Activated CD4-positive, alpha-beta T cell treated with anti-CD3 and anti-CD28 coated beads for 36 hours (primary cell): ENCODE measurements at regions of chr2 and their contacts with region 1.

Region 1: DNA sequence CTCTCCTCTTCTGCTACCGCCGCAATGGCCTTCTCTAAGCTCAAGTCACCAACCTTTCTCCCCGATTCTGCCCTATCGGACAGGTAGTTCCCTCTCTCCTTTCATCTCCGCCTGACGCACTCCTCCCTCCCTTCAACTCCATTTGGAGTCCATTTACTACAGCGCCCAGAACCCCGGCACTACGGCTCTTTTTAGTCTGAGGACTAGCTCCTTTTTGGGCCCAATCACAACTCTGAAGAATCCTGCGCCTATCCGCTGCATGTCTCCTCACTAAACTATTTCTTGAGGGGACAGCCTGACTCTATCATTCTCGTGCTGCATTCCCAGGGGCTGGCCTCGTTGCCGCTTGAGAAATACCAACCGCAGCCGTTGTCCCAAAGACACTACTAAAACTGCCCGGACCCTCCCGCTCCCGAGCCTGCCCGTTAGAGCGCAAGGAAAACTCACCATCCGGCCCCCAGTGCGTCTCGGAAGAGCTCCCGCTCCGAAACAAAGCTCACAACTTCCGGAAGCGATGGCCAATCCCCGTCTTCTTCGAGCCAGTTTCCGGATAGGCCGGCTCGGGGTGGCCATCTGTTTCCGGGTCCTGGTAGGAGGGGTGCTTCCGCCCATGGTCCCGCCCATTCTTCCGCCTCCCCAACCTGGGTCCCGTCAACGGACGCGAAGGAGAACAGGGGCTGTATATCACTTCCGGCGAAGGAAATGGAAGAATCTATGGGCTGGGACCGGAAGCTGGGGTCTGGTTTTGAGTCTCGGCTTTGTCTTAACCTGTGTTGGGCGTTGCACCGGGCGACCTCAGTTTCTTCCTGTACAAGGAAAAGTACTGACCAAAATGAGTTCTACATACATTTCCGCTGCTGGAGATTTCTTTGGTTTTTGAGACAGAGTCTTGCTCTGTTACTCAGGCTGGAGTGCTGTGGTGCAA is at the start of gene TPRKB:
- DNase-seq: peak; percentile 98
- ATAC-seq: peak; percentile 99
- H3K4me3 Mint-ChIP-seq: peak within 1 kb of the TSS; percentile 92
- H3K27ac Mint-ChIP-seq: peak within 1 kb of the TSS; percentile 94
- H3K4me1 Mint-ChIP-seq: peaks cover 14% of the 10 kb centered on the region
- H3K27me3 Mint-ChIP-seq: no peaks in the 10 kb centered on the region
- total RNA-seq, gene TPRKB: 23.3 to 35.3 TPM

Region 2: DNA sequence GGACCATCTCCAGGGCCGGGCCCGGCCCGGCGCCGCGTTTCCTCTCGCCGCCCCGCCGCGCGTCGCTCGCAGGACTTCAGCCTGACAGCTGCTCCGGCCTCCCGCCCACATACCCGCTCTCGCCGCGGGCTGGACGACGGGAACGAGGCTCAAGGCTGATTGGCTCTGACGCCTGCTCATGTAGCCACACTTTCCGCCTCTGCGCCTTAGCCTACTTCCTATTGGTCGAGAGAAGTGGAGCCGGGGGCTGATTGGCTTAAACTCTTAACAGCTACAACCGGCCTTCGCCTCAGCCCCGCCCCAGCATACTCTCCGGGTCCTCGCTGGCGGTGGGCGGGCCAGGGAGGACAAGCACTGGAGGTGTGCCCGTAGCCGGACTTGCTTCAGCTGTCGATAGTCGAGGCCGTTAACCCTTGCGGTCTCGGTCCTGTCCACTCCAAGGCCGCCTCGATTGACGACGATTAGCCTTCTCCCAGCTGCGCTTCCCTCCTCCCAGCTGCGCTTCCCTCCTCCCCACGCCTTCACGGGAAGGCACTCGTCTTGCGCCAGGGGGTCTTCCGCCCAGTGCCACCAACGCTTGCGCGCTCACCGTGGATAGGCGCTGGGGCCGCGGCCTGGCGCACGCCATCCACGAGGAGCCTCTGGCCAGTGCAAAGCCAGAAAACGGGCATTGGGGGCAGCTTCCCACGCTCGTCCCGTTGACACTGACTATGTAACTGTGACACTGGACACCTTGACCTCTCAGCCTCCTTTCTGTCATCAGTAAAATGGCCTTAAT is 503.8 kb before region 1 on chr2 and contains the start of gene PRADC1:
- CTCF ChIA-PET with region 1: no interaction called
- POLR2A ChIA-PET with region 1: interaction called, 5 read pairs
- intact Hi-C with region 1: loop called (anchors 1 to 2 kb)
- DNase-seq: peak; percentile 96
- ATAC-seq: peak; percentile 89
- H3K4me3 Mint-ChIP-seq: peak within 1 kb of the TSS; percentile 92
- H3K27ac Mint-ChIP-seq: peak within 1 kb of the TSS; percentile 98
- H3K4me1 Mint-ChIP-seq: peaks cover 32% of the 10 kb centered on the region
- H3K27me3 Mint-ChIP-seq: no peaks in the 10 kb centered on the region
- total RNA-seq, gene PRADC1: 11.8 to 12.1 TPM

Region 3: GRCh38 chr2:73779467-73780236 is 42.5 kb after region 1 on chr2 and contains the start of gene DUSP11:
- CTCF ChIA-PET with region 1: interaction called, 3 read pairs
- POLR2A ChIA-PET with region 1: no interaction called
- intact Hi-C with region 1: loop called in 1 of 2 experiments (anchors 1 kb)
- DNase-seq: peak; percentile 98
- ATAC-seq: peak; percentile 100
- H3K4me3 Mint-ChIP-seq: peak within 1 kb of the TSS; percentile 100
- H3K27ac Mint-ChIP-seq: peak within 1 kb of the TSS; percentile 98
- H3K4me1 Mint-ChIP-seq: peaks cover 27% of the 10 kb centered on the region
- H3K27me3 Mint-ChIP-seq: peaks cover 2% of the 10 kb centered on the region
- total RNA-seq, gene DUSP11: 27.6 to 33.5 TPM

Region 4: DNA sequence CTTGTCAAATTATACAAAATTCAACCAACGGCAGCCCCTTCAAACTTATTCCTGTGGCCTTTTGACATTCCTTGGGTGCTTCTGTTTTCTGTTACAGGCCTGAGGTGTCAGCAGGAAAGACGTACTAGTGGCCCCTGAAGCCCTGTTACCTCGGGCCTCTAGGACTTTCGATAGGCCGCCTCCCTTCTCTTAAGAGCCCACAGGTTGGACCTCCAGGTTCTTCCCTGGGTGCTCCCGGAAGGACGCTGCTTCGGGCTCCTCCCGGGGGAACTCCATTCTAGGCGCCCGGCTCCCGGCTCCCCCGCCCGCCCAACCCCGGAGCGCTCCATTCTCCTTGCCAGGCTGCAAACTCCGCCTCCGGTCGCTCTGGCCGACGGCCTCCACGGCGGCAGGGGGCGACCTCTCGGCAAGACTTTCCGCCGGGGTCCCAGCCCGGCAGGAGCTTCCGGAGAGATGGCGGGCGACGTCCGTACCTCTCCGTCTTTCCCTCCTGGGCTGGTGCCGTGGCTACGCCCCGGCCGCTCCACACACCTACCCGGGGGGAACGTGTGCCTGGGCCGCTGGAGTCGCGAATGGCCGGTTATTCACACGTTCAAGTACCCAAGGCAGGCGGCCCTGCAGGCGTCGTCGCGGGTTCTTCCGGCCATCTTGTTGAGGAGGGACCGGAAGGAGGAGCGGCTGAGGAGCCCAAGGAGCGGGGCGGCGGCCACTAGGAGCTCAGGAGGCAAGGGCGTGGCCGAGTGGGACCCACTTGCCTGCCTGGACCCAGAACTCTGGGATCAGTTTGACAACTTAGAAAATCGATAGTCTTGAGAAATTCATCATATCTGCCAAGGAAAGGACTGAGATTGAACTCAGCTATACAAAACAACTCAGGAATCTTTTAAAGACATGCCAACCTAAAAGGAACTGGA is 383.1 kb after region 1 on chr2:
- CTCF ChIA-PET with region 1: no interaction called
- POLR2A ChIA-PET with region 1: no interaction called
- intact Hi-C with region 1: loop called in 1 of 2 experiments (anchors 1 kb)
- DNase-seq: peak; percentile 92
- ATAC-seq: peak; percentile 97
- H3K4me3 Mint-ChIP-seq: peak overlapping the region; percentile 81
- H3K27ac Mint-ChIP-seq: peak overlapping the region; percentile 89
- H3K4me1 Mint-ChIP-seq: peaks cover 7% of the 10 kb centered on the region
- H3K27me3 Mint-ChIP-seq: peaks cover 3% of the 10 kb centered on the region

Region 5: DNA sequence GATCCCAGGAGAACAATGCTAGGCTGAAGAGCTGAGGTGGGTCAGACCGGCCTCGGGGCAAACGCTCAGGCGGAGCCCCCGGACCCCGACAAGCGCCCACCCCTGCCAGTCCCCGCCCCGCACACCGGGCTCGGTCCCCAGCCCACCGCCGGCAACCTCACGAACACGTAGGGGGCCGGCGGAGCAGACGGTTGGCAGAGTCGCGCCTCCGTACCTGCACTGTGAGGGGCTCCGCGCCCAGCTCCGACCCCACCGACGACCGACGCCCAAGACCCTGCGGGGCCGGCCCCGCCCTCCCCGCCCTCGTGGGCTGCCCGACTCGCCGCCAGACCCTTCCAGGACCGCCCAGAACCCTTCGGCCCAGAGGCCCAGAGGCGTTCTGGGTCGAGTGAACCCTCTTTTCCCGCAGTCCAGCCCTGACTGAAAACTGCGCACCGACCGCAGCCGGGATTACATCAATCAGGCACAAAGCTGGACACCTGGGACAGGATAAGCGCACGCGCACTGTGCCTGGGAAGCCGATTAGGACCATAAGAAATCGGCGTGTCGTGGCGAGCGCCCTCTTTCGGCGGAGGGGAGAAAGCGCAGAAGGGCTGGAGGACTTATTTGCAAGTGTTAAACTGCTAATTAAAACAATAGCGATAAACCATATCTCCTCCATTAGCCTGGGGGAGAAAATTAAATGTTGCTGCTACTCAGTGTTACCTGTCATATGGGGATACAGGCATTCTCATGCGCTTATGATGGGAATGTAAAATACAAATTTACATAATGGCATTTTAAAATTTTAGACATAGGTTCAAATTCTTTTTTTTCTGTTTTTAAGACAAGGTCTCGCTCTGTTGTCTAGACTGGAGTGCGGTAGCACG is 654.7 kb after region 1 on chr2:
- CTCF ChIA-PET with region 1: interaction called, 3 read pairs
- POLR2A ChIA-PET with region 1: no interaction called
- intact Hi-C with region 1: loop called in 1 of 2 experiments (anchors 2 kb)
- DNase-seq: peak; percentile 98
- ATAC-seq: peak; percentile 78
- H3K4me3 Mint-ChIP-seq: peak overlapping the region; percentile 86
- H3K27ac Mint-ChIP-seq: peak overlapping the region; percentile 99
- H3K4me1 Mint-ChIP-seq: peaks cover 7% of the 10 kb centered on the region
- H3K27me3 Mint-ChIP-seq: no peaks in the 10 kb centered on the region

Region 6: GRCh38 chr2:74507145-74507925 is 770.2 kb after region 1 on chr2 and contains the start of gene PCGF1:
- CTCF ChIA-PET with region 1: no interaction called
- POLR2A ChIA-PET with region 1: no interaction called
- intact Hi-C with region 1: loop called in 1 of 2 experiments (anchors 1 kb)
- DNase-seq: peak; percentile 99
- ATAC-seq: peak; percentile 92
- H3K4me3 Mint-ChIP-seq: peak within 1 kb of the TSS; percentile 93
- H3K27ac Mint-ChIP-seq: peak within 1 kb of the TSS; percentile 99
- H3K4me1 Mint-ChIP-seq: peaks cover 40% of the 10 kb centered on the region
- H3K27me3 Mint-ChIP-seq: peaks cover 38% of the 10 kb centered on the region
- total RNA-seq, gene PCGF1: 21.7 to 28.7 TPM